ENCODE measurements at regions of chr13 and their contacts with region 1.

Region 1: GRCh38 chr13:41222259-41222852 is 28.0 kb upstream of the KBTBD7 start:
- DNase-seq: peak in 1 of 2 donors; percentile 33
- H3K4me3 ChIP-seq: no peak overlapping the region
- CTCF ChIP-seq: peak in 1 of 3 donors; percentile 38
- POLR2A ChIP-seq: no peak

Region 2: DNA sequence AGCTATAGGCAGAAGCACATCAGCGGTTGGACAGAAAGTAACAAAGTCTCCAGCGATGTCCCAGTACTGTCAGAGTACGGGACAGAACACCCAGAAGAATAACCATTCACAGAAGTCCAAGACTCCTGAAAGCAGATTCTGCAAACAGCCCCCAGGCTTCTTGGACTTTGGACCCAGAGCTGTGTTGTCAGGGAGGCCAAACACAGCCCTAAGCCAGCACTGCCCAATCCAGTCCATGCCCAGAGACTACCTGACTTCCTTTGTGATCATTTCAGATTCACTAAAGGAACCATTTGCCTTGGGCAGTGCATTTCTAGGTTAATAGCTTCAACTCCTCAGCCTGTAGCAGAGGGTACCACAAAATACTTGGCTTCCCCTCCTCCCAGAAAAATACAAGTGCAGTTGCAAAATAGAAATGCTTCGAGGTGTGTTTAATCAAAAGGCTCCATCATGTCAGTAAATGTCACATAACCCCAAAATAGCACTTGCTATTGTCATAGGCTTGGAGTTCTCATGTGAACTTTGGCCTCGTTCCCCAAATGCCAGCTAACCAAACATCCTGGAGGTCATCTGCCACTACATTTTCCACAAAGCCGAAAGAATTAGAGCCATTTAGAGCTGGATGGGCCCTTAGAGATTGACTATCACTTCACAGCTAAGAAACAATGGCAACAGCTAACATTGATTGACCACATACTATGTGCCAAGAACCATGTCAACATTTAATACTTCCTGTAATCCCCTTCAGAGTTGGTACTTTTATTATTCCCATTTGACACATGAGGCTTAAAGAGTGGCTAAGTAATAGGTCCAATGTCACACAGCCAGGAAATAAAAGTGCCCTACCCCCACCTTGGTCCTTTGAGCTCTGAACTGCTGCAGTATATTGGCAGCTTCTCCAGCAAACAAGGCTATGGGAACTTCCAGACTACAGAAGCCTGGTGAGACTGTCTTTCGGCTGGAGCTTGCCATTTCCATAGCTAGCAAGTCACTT is 885.8 kb before region 1 on chr13:
- intact Hi-C with region 1: no loop called
- DNase-seq: no peak
- H3K4me3 ChIP-seq: no peak overlapping the region
- CTCF ChIP-seq: no peak
- POLR2A ChIP-seq: no peak

Region 3: GRCh38 chr13:40916207-40916998 is 306.0 kb before region 1 on chr13:
- intact Hi-C with region 1: loop called (anchors 5 kb)
- DNase-seq: no peak
- H3K4me3 ChIP-seq: no peak overlapping the region
- CTCF ChIP-seq: no peak
- POLR2A ChIP-seq: no peak

Region 4: GRCh38 chr13:41074523-41074922 is 147.8 kb before region 1 on chr13:
- intact Hi-C with region 1: loop called (anchors 5 kb)
- DNase-seq: no peak
- H3K4me3 ChIP-seq: no peak overlapping the region
- CTCF ChIP-seq: no peak
- POLR2A ChIP-seq: no peak

Measured in lower leg skin (tissue), 4 donors.